Naive thymus-derived CD4-positive, alpha-beta T cell (primary cell): ENCODE measurements at regions of chr7 and their contacts with region 1.

Region 1: GRCh38 chr7:65872776-65873581 is at the start of gene VKORC1L1:
- DNase-seq: peak; percentile 87 to 97 (median 93)
- ATAC-seq: peak; percentile 94
- H3K4me3 ChIP-seq: peak within 1 kb of the TSS; percentile 47
- H3K4me3 Mint-ChIP-seq: peak within 1 kb of the TSS; percentile 81 to 92 (median 86)
- H3K27ac ChIP-seq: peak within 1 kb of the TSS; percentile 67
- H3K27ac Mint-ChIP-seq: peak within 1 kb of the TSS; percentile 43 to 90 (median 82)
- H3K4me1 ChIP-seq: no peaks in the 10 kb centered on the region
- H3K4me1 Mint-ChIP-seq: peaks cover 0 to 11% (median 6%) of the 10 kb centered on the region in 7 donors
- H3K27me3 ChIP-seq: no peaks in the 10 kb centered on the region
- H3K27me3 Mint-ChIP-seq: no peaks in the 10 kb centered on the region
- total RNA-seq, gene VKORC1L1: 3.4 to 15.8 (median 9.4) TPM

Region 2: GRCh38 chr7:63900394-63901203 is 1972.4 kb before region 1 on chr7:
- CTCF ChIA-PET with region 1: no interaction called
- POLR2A ChIA-PET with region 1: no interaction called
- intact Hi-C with region 1: loop called in 1 of 2 experiments (anchors 2 kb)
- DNase-seq: peak; percentile 64 to 95 (median 91)
- ATAC-seq: peak; percentile 97
- H3K4me3 ChIP-seq: peak overlapping the region; percentile 84
- H3K4me3 Mint-ChIP-seq: peak overlapping the region; percentile 82 to 100 (median 98)
- H3K27ac ChIP-seq: peak overlapping the region; percentile 89
- H3K27ac Mint-ChIP-seq: peak overlapping the region; percentile 88 to 99 (median 95)
- H3K4me1 ChIP-seq: no peaks in the 10 kb centered on the region
- H3K4me1 Mint-ChIP-seq: peaks cover 0 to 22% (median 9%) of the 10 kb centered on the region in 7 donors
- H3K27me3 ChIP-seq: no peaks in the 10 kb centered on the region
- H3K27me3 Mint-ChIP-seq: peaks cover 0 to 4% (median 0%) of the 10 kb centered on the region in 5 donors

Region 3: GRCh38 chr7:64902806-64903721 is 969.9 kb before region 1 on chr7 and contains the start of gene ZNF273:
- CTCF ChIA-PET with region 1: no interaction called
- POLR2A ChIA-PET with region 1: no interaction called
- intact Hi-C with region 1: loop called in 1 of 2 experiments (anchors 2 kb)
- DNase-seq: peak; percentile 72 to 94 (median 90)
- ATAC-seq: peak; percentile 100
- H3K4me3 ChIP-seq: peak within 1 kb of the TSS; percentile 95
- H3K4me3 Mint-ChIP-seq: peak within 1 kb of the TSS; percentile 95 to 98 (median 95)
- H3K27ac ChIP-seq: peak within 1 kb of the TSS; percentile 83
- H3K27ac Mint-ChIP-seq: peak within 1 kb of the TSS; percentile 92 to 97 (median 95)
- H3K4me1 ChIP-seq: peaks cover 7 to 14% of the 10 kb centered on the region in 2 donors
- H3K4me1 Mint-ChIP-seq: peaks cover 36 to 55% (median 50%) of the 10 kb centered on the region in 7 donors
- H3K27me3 ChIP-seq: no peaks in the 10 kb centered on the region
- H3K27me3 Mint-ChIP-seq: no peaks in the 10 kb centered on the region
- total RNA-seq, gene ZNF273: 3.8 to 10.9 (median 7.5) TPM

Region 4: DNA sequence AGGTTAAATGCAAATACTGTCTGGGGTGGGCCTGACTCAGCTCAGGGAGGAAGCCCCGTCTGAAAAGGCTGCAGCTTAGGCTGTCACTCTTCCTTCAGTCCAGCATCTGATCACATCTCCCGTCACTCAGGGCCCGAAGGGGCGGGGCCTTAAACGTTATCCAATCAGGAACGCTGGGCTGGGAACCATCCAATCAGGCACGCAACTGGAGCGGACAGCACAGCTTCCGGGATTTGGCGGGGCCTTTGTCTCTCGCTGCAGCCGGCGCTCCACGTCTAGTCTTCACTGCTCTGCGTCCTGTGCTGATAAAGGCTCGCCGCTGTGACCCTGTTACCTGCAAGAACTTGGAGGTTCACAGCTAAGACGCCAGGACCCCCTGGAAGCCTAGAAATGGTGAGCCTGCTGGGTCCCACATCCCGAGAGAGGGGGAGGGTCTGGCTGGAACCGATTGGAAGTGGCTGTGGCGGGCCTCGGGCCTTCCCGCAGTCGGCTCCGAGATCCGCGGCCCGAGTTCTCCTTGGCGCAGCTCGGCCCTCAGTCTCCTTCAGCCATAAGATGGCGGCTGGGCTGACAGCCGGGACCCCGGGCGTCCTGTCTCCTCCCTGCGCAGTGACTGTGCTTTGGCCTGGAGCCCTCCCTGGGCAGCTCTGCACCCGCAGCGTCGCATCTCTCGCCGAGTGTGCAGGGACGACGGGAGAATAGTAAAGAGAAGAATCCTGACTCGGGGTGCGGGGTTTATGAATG is 499.2 kb before region 1 on chr7 and contains the start of gene ZNF92:
- CTCF ChIA-PET with region 1: no interaction called
- POLR2A ChIA-PET with region 1: no interaction called
- intact Hi-C with region 1: loop called in 1 of 2 experiments (anchors 2 kb)
- DNase-seq: peak; percentile 84 to 95 (median 94)
- ATAC-seq: peak; percentile 99
- H3K4me3 ChIP-seq: peak within 1 kb of the TSS; percentile 87
- H3K4me3 Mint-ChIP-seq: peak within 1 kb of the TSS; percentile 90 to 98 (median 96)
- H3K27ac ChIP-seq: peak within 1 kb of the TSS; percentile 82
- H3K27ac Mint-ChIP-seq: peak within 1 kb of the TSS; percentile 87 to 96 (median 93)
- H3K4me1 ChIP-seq: peaks cover 8 to 21% of the 10 kb centered on the region in 2 donors
- H3K4me1 Mint-ChIP-seq: peaks cover 18 to 57% (median 49%) of the 10 kb centered on the region in 7 donors
- H3K27me3 ChIP-seq: no peaks in the 10 kb centered on the region
- H3K27me3 Mint-ChIP-seq: no peaks in the 10 kb centered on the region
- total RNA-seq, gene ZNF92: 16.3 to 22.5 (median 19.3) TPM

Region 5: GRCh38 chr7:65971021-65971420 is 98.0 kb after region 1 on chr7:
- CTCF ChIA-PET with region 1: no interaction called
- POLR2A ChIA-PET with region 1: no interaction called
- intact Hi-C with region 1: no loop called
- DNase-seq: no peak
- ATAC-seq: no peak
- H3K4me3 ChIP-seq: no peak overlapping the region
- H3K4me3 Mint-ChIP-seq: no peak overlapping the region
- H3K27ac ChIP-seq: no peak overlapping the region
- H3K27ac Mint-ChIP-seq: peak overlapping the region in 1 of 9 donors; percentile 41
- H3K4me1 ChIP-seq: no peaks in the 10 kb centered on the region
- H3K4me1 Mint-ChIP-seq: peaks cover 0 to 6% (median 0%) of the 10 kb centered on the region in 7 donors
- H3K27me3 ChIP-seq: no peaks in the 10 kb centered on the region
- H3K27me3 Mint-ChIP-seq: no peaks in the 10 kb centered on the region

Region 6: DNA sequence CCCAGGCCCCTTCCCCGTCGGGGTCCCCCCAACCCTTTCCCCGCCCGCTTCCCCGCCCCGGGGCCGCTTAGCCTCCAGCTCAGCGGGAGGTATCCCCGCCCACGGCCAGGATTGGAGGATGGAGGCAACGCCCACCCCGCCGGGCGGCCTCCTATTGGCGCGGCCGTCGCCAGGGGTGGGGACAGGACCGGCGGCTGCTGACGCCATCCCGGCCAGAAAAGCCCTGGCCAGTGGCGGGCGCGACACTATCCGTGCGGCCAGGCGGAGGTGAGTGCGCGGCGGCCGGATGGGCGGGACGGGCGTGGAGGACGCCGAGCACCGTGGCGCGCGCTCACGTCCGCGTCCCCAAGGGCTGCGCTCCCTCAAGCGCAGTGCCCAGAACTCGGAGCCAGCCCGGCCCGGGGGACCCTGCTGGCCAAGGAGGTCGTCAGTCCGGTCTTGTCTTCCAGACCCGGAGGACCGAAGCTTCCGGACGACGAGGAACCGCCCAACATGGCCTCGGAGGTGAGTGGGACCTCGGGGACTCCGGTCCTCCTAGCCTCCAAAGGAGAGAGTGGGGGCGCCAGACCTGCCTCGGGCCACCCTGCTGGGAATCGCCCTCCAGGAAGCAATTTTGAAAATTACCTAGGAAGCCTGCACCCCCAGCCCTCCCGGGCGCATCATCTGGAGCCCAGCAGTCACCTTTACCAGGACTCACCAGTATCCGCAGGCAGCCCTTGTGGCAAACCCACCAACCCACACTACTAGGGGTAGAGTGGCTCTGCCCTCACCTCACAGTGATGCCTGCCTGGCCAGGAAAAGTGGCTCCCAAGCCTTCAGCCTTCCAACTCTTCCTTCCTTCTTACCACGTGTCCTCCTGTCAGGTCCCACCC is 202.8 kb after region 1 on chr7 and contains the start of gene ASL:
- CTCF ChIA-PET with region 1: no interaction called
- POLR2A ChIA-PET with region 1: no interaction called
- intact Hi-C with region 1: loop called in 1 of 2 experiments (anchors 2 kb)
- DNase-seq: peak; percentile 71 to 96 (median 78)
- ATAC-seq: peak; percentile 99
- H3K4me3 ChIP-seq: peak within 1 kb of the TSS; percentile 83
- H3K4me3 Mint-ChIP-seq: peak within 1 kb of the TSS; percentile 80 to 96 (median 87)
- H3K27ac ChIP-seq: peak within 1 kb of the TSS; percentile 69
- H3K27ac Mint-ChIP-seq: peak within 1 kb of the TSS in 8 of 9 donors; percentile 42 to 89 (median 77)
- H3K4me1 ChIP-seq: peaks cover 6 to 7% of the 10 kb centered on the region in 2 donors
- H3K4me1 Mint-ChIP-seq: peaks cover 5 to 20% (median 19%) of the 10 kb centered on the region in 7 donors
- H3K27me3 ChIP-seq: no peaks in the 10 kb centered on the region
- H3K27me3 Mint-ChIP-seq: peaks cover 0 to 2% (median 0%) of the 10 kb centered on the region in 5 donors
- total RNA-seq, gene ASL: 11.3 to 29.7 (median 12.8) TPM

Region 7: GRCh38 chr7:66088861-66089838 is 216.2 kb after region 1 on chr7:
- CTCF ChIA-PET with region 1: no interaction called
- POLR2A ChIA-PET with region 1: no interaction called
- intact Hi-C with region 1: no loop called
- DNase-seq: no peak
- ATAC-seq: no peak
- H3K4me3 ChIP-seq: no peak overlapping the region
- H3K4me3 Mint-ChIP-seq: no peak overlapping the region
- H3K27ac ChIP-seq: no peak overlapping the region
- H3K27ac Mint-ChIP-seq: no peak overlapping the region
- H3K4me1 ChIP-seq: no peaks in the 10 kb centered on the region
- H3K4me1 Mint-ChIP-seq: peaks cover 0 to 2% (median 0%) of the 10 kb centered on the region in 7 donors
- H3K27me3 ChIP-seq: no peaks in the 10 kb centered on the region
- H3K27me3 Mint-ChIP-seq: no peaks in the 10 kb centered on the region

Region 8: DNA sequence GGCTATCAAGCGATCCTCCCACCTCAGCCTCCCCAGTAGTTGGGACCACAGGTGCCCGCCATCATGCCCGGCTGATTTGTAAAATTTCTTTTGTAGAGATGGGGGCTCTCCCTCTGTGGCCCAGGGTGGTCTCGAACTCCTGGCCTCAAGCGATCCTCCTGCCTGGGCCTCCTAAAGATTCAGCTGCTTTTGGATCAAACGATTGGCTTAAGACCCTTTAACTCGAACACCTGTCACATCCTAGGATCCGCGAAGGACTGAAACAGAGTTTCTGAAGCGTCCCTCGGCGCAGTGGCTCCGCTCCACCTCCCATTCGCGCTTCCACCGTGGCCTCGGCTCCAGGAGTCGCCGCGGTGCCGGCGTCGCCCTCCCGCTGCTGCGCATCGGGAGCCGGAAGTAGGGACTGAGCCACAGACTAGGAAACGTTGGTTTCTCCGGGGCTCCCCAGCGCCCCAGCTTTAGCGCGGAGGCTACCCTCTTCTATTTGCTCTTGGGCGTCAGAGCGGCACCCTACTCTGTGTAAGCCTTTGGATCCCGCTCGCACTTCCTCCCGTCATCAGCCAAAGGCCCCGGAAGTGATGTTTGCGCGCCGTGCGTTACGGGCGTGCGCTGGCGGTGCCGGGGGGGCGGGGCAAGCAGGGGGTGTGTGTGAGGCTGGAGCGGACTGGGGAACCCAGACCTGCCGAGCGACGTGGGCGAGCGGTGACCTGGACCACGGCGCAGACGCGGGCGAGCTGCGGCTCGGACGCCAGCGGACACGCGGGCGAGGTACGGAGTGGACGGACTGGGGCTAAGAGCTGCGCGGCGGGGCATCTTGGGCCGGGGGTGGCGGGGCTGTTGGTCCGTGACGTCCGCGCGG is 808.7 kb after region 1 on chr7:
- CTCF ChIA-PET with region 1: no interaction called
- POLR2A ChIA-PET with region 1: no interaction called
- intact Hi-C with region 1: loop called in 1 of 2 experiments (anchors 5 kb)
- DNase-seq: peak; percentile 92 to 97 (median 95)
- ATAC-seq: peak; percentile 98
- H3K4me3 ChIP-seq: peak overlapping the region; percentile 96
- H3K4me3 Mint-ChIP-seq: peak overlapping the region; percentile 82 to 96 (median 92)
- H3K27ac ChIP-seq: peak overlapping the region; percentile 95
- H3K27ac Mint-ChIP-seq: peak overlapping the region; percentile 86 to 98 (median 97)
- H3K4me1 ChIP-seq: peaks cover 5 to 11% of the 10 kb centered on the region in 2 donors
- H3K4me1 Mint-ChIP-seq: peaks cover 7 to 59% (median 31%) of the 10 kb centered on the region in 7 donors
- H3K27me3 ChIP-seq: no peaks in the 10 kb centered on the region
- H3K27me3 Mint-ChIP-seq: no peaks in the 10 kb centered on the region

Region 9: DNA sequence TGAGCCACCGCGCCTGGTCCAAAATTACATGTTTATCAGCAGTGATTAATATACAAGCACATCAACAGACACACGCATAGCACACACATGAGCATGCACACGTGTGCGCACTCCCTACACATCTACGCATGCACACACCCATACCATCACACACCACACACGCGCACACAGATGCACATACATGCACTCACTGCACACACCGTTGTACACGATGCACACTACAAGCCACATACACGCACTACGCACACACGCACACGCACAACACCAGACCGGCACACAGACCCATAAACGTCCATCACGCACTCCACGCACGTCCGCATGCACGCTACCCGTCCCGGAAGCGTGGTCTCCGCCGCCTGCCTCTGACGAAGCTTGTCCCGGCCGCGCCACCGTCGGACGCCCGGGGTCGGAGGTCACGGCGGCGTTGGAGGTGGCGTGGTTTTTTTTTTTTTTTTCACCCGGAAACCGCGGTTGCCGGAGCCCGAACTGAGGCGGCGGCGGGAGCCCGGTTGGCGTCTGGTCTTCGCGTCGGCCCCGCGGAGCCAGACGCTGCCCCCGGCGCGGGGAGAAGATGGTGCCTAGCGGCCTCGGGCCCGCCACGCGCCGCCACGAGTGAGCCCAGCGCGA is 1047.9 kb after region 1 on chr7 and contains the start of gene TMEM248:
- CTCF ChIA-PET with region 1: no interaction called
- POLR2A ChIA-PET with region 1: no interaction called
- intact Hi-C with region 1: loop called in 1 of 2 experiments (anchors 5 kb)
- DNase-seq: peak; percentile 87 to 97 (median 94)
- ATAC-seq: peak; percentile 95
- H3K4me3 ChIP-seq: peak within 1 kb of the TSS; percentile 80
- H3K4me3 Mint-ChIP-seq: peak within 1 kb of the TSS; percentile 91 to 100 (median 98)
- H3K27ac ChIP-seq: peak within 1 kb of the TSS; percentile 93
- H3K27ac Mint-ChIP-seq: peak within 1 kb of the TSS; percentile 96 to 100 (median 98)
- H3K4me1 ChIP-seq: peaks cover 18 to 20% of the 10 kb centered on the region in 2 donors
- H3K4me1 Mint-ChIP-seq: peaks cover 14 to 49% (median 37%) of the 10 kb centered on the region in 7 donors
- H3K27me3 ChIP-seq: no peaks in the 10 kb centered on the region
- H3K27me3 Mint-ChIP-seq: no peaks in the 10 kb centered on the region
- total RNA-seq, gene TMEM248: 81.0 to 107 (median 91.6) TPM